Esophagus muscularis mucosa (tissue), 4 donors: ENCODE measurements at regions of chr3 and their contacts with region 1.

Region 1: GRCh38 chr3:126752303-126752842 is 48.3 kb downstream of the CHCHD6 start:
- DNase-seq: no peak
- H3K4me3 ChIP-seq: no peak overlapping the region
- H3K27ac ChIP-seq: no peak overlapping the region
- H3K4me1 ChIP-seq: peaks cover 11 to 18% (median 14%) of the 10 kb centered on the region in 4 donors
- H3K27me3 ChIP-seq: no peaks in the 10 kb centered on the region
- CTCF ChIP-seq: peak; percentile 77 to 87 (median 81)
- EP300 ChIP-seq: no peak
- POLR2A ChIP-seq: no peak

Region 2: GRCh38 chr3:126508539-126508938 is 243.8 kb before region 1 on chr3:
- intact Hi-C with region 1: no loop called
- DNase-seq: no peak
- H3K4me3 ChIP-seq: no peak overlapping the region
- H3K27ac ChIP-seq: no peak overlapping the region
- H3K4me1 ChIP-seq: no peaks in the 10 kb centered on the region
- H3K27me3 ChIP-seq: peaks cover 0 to 33% (median 0%) of the 10 kb centered on the region in 4 donors
- CTCF ChIP-seq: no peak
- EP300 ChIP-seq: no peak
- POLR2A ChIP-seq: no peak

Region 3: GRCh38 chr3:126926684-126927400 is 174.5 kb after region 1 on chr3:
- intact Hi-C with region 1: no loop called
- DNase-seq: no peak
- H3K4me3 ChIP-seq: no peak overlapping the region
- H3K27ac ChIP-seq: peak overlapping the region; percentile 38 to 57 (median 42)
- H3K4me1 ChIP-seq: peaks cover 21 to 39% (median 27%) of the 10 kb centered on the region in 4 donors
- H3K27me3 ChIP-seq: no peaks in the 10 kb centered on the region
- CTCF ChIP-seq: peak in 1 of 3 experiments; percentile 9
- EP300 ChIP-seq: no peak
- POLR2A ChIP-seq: no peak

Region 4: GRCh38 chr3:126982471-126983175 is 230.2 kb after region 1 on chr3 and contains the start of gene PLXNA1:
- intact Hi-C with region 1: loop called (anchors 2 kb)
- DNase-seq: no peak
- H3K4me3 ChIP-seq: peak within 1 kb of the TSS; percentile 68 to 92 (median 84)
- H3K27ac ChIP-seq: peak within 1 kb of the TSS; percentile 76 to 85 (median 80)
- H3K4me1 ChIP-seq: peaks cover 24 to 52% (median 44%) of the 10 kb centered on the region in 4 donors
- H3K27me3 ChIP-seq: peaks cover 0 to 13% (median 0%) of the 10 kb centered on the region in 4 donors
- CTCF ChIP-seq: peak; percentile 83 to 91 (median 85)
- EP300 ChIP-seq: no peak
- POLR2A ChIP-seq: no peak
- total RNA-seq, gene PLXNA1: 33.6 to 82.4 (median 47.0) TPM

Region 5: GRCh38 chr3:127002195-127003174 is 250.1 kb after region 1 on chr3:
- intact Hi-C with region 1: loop called (anchors 2 kb)
- DNase-seq: peak; percentile 95
- H3K4me3 ChIP-seq: peak overlapping the region; percentile 31 to 47 (median 35)
- H3K27ac ChIP-seq: peak overlapping the region; percentile 62 to 78 (median 69)
- H3K4me1 ChIP-seq: peaks cover 23 to 65% (median 53%) of the 10 kb centered on the region in 4 donors
- H3K27me3 ChIP-seq: no peaks in the 10 kb centered on the region
- CTCF ChIP-seq: peak; percentile 40 to 43 (median 41)
- EP300 ChIP-seq: no peak
- POLR2A ChIP-seq: no peak

Region 6: GRCh38 chr3:127177231-127177630 is 424.9 kb after region 1 on chr3:
- intact Hi-C with region 1: loop called (anchors 5 kb)
- DNase-seq: no peak
- H3K4me3 ChIP-seq: no peak overlapping the region
- H3K27ac ChIP-seq: no peak overlapping the region
- H3K4me1 ChIP-seq: peaks cover 0 to 7% (median 6%) of the 10 kb centered on the region in 4 donors
- H3K27me3 ChIP-seq: peaks cover 0 to 21% (median 0%) of the 10 kb centered on the region in 4 donors
- CTCF ChIP-seq: peak; percentile 25 to 27 (median 26)
- EP300 ChIP-seq: no peak
- POLR2A ChIP-seq: no peak

Region 7: GRCh38 chr3:127455541-127456450 is 703.4 kb after region 1 on chr3:
- intact Hi-C with region 1: loop called (anchors 2 kb)
- DNase-seq: no peak
- H3K4me3 ChIP-seq: peak overlapping the region; percentile 35 to 43 (median 38)
- H3K27ac ChIP-seq: no peak overlapping the region
- H3K4me1 ChIP-seq: peaks cover 18 to 26% (median 25%) of the 10 kb centered on the region in 4 donors
- H3K27me3 ChIP-seq: peaks cover 0 to 84% (median 53%) of the 10 kb centered on the region in 4 donors
- CTCF ChIP-seq: peak; percentile 84 to 93 (median 89)
- EP300 ChIP-seq: no peak
- POLR2A ChIP-seq: no peak

Region 8: GRCh38 chr3:127544192-127544802 is 791.9 kb after region 1 on chr3:
- intact Hi-C with region 1: loop called (anchors 5 kb)
- DNase-seq: no peak
- H3K4me3 ChIP-seq: no peak overlapping the region
- H3K27ac ChIP-seq: no peak overlapping the region
- H3K4me1 ChIP-seq: peaks cover 18 to 33% (median 23%) of the 10 kb centered on the region in 4 donors
- H3K27me3 ChIP-seq: no peaks in the 10 kb centered on the region
- CTCF ChIP-seq: peak; percentile 68 to 84 (median 76)
- EP300 ChIP-seq: no peak
- POLR2A ChIP-seq: no peak